B cell (primary cell): ENCODE measurements at regions of chr15 and their contacts with region 1.

Region 1: GRCh38 chr15:40081691-40082194 is 26.9 kb downstream of the BMF start:
- DNase-seq: no peak
- ATAC-seq: no peak
- H3K4me3 ChIP-seq: peak overlapping the region; percentile 1 to 66 (median 14)
- H3K4me3 Mint-ChIP-seq: peak overlapping the region; percentile 74
- H3K27ac ChIP-seq: peak overlapping the region; percentile 81 to 82
- H3K27ac Mint-ChIP-seq: peak overlapping the region; percentile 96
- H3K4me1 ChIP-seq: peaks cover 37 to 49% of the 10 kb centered on the region in 2 donors
- H3K4me1 Mint-ChIP-seq: peaks cover 58% of the 10 kb centered on the region
- H3K27me3 ChIP-seq: no peaks in the 10 kb centered on the region
- H3K27me3 Mint-ChIP-seq: no peaks in the 10 kb centered on the region
- CTCF ChIP-seq: no peak

Region 2: GRCh38 chr15:40069178-40070165 is 12.3 kb before region 1 on chr15:
- CTCF ChIA-PET with region 1: interaction called, 11 read pairs
- POLR2A ChIA-PET with region 1: interaction called, 5 read pairs
- intact Hi-C with region 1: loop called (anchors 1 kb)
- DNase-seq: peak; percentile 75
- ATAC-seq: peak; percentile 78
- H3K4me3 ChIP-seq: no peak overlapping the region
- H3K4me3 Mint-ChIP-seq: peak overlapping the region; percentile 39
- H3K27ac ChIP-seq: peak overlapping the region; percentile 54 to 78
- H3K27ac Mint-ChIP-seq: peak overlapping the region; percentile 90
- H3K4me1 ChIP-seq: peaks cover 34 to 38% of the 10 kb centered on the region in 2 donors
- H3K4me1 Mint-ChIP-seq: peaks cover 41% of the 10 kb centered on the region
- H3K27me3 ChIP-seq: no peaks in the 10 kb centered on the region
- H3K27me3 Mint-ChIP-seq: no peaks in the 10 kb centered on the region
- CTCF ChIP-seq: no peak

Region 3: GRCh38 chr15:40092256-40092978 is 10.7 kb after region 1 on chr15:
- CTCF ChIA-PET with region 1: interaction called, 489 read pairs
- POLR2A ChIA-PET with region 1: interaction called, 58 read pairs
- intact Hi-C with region 1: loop called (anchors 1 kb)
- DNase-seq: no peak
- ATAC-seq: no peak
- H3K4me3 ChIP-seq: peak overlapping the region in 1 of 5 experiments; percentile 38
- H3K4me3 Mint-ChIP-seq: peak overlapping the region; percentile 87
- H3K27ac ChIP-seq: peak overlapping the region; percentile 99 to 100
- H3K27ac Mint-ChIP-seq: peak overlapping the region; percentile 98
- H3K4me1 ChIP-seq: peaks cover 61 to 73% of the 10 kb centered on the region in 2 donors
- H3K4me1 Mint-ChIP-seq: peaks cover 75% of the 10 kb centered on the region
- H3K27me3 ChIP-seq: no peaks in the 10 kb centered on the region
- H3K27me3 Mint-ChIP-seq: no peaks in the 10 kb centered on the region
- CTCF ChIP-seq: no peak

Region 4: DNA sequence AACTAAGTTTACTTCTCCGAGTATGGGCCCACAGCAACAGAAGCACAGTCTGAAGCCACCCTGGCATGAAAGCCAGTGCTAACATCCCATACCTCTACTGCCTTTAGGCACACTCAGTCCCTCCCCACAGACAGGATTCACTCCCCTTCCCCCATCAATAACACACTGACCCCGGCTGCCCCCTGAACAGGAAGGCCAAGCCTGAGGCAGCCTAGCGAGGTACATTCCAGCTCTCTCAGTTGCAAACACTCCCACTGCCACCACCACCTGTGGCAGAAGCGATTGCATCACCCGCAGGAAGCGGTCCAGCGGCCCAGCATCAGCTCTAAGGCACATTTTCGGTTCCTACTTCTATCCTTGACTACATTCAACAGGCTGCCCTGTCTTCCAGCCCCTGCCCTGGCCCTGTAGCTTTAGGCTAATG is 33.9 kb after region 1 on chr15:
- CTCF ChIA-PET with region 1: interaction called, 489 read pairs
- POLR2A ChIA-PET with region 1: no interaction called
- intact Hi-C with region 1: loop called (anchors 5 kb)
- DNase-seq: peak; percentile 88
- ATAC-seq: peak; percentile 92
- H3K4me3 ChIP-seq: no peak overlapping the region
- H3K4me3 Mint-ChIP-seq: peak overlapping the region; percentile 69
- H3K27ac ChIP-seq: peak overlapping the region; percentile 75 to 82
- H3K27ac Mint-ChIP-seq: peak overlapping the region; percentile 99
- H3K4me1 ChIP-seq: peaks cover 22 to 25% of the 10 kb centered on the region in 2 donors
- H3K4me1 Mint-ChIP-seq: peaks cover 31% of the 10 kb centered on the region
- H3K27me3 ChIP-seq: no peaks in the 10 kb centered on the region
- H3K27me3 Mint-ChIP-seq: no peaks in the 10 kb centered on the region
- CTCF ChIP-seq: no peak

Region 5: DNA sequence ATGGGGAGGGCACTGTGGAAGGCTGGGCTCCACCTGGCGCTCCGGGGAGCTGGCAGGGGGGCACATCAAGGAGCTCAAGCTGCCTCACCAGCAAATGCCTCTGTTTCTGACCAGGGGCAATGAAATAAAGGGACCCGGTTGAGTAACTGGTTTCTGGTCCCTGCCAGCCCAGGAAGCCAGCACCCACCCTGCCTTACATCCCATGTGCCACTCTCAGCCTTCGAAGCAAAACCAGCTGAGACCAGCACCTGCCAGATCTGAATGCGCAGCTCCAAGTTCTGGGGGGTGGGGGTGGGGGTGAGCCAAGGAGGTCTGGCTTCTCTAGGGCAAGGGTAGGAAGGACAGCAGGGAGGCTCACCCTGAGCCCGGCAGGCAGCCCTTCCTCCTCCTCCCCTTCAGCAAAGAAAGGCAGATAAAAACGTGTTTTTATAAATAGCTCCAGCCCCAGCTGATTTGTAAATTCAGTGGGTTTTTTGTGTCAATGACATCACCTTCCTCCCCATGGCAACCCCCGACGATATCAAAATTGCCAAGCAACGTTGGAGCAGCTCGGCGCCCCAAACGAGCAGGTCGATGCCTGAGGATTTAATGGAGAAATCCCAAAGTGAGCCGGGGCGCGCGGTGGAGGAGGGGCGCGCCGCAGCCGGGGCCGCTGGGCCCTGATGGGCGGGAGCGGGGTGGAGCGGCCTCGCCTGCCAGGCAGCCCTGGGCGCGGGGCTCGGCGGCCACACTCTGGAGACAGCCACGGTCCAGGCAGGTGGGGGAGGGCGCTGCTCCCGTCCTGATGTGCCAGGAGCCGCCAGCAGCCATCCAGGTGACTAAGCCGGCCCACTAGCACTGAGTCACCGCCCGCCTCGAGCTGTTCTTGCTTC is 157.0 kb after region 1 on chr15 and contains the start of gene PAK6:
- CTCF ChIA-PET with region 1: no interaction called
- POLR2A ChIA-PET with region 1: no interaction called
- intact Hi-C with region 1: no loop called
- DNase-seq: peak; percentile 74
- ATAC-seq: peak; percentile 39
- H3K4me3 ChIP-seq: peak within 1 kb of the TSS in 4 of 5 experiments; percentile 22 to 55 (median 34)
- H3K4me3 Mint-ChIP-seq: peak within 1 kb of the TSS; percentile 71
- H3K27ac ChIP-seq: peak within 1 kb of the TSS in 1 of 2 donors; percentile 44
- H3K27ac Mint-ChIP-seq: peak within 1 kb of the TSS; percentile 5
- H3K4me1 ChIP-seq: peaks cover 30 to 31% of the 10 kb centered on the region in 2 donors
- H3K4me1 Mint-ChIP-seq: peaks cover 36% of the 10 kb centered on the region
- H3K27me3 ChIP-seq: peaks cover 0 to 18% (median 6%) of the 10 kb centered on the region in 4 experiments
- H3K27me3 Mint-ChIP-seq: peaks cover 9% of the 10 kb centered on the region
- CTCF ChIP-seq: no peak
- total RNA-seq, gene PAK6: 0.80 and 1.2 TPM in 2 replicates

Region 6: GRCh38 chr15:40249482-40250303 is 167.9 kb after region 1 on chr15:
- CTCF ChIA-PET with region 1: no interaction called
- POLR2A ChIA-PET with region 1: no interaction called
- intact Hi-C with region 1: no loop called
- DNase-seq: no peak
- ATAC-seq: no peak
- H3K4me3 ChIP-seq: no peak overlapping the region
- H3K4me3 Mint-ChIP-seq: no peak overlapping the region
- H3K27ac ChIP-seq: no peak overlapping the region
- H3K27ac Mint-ChIP-seq: no peak overlapping the region
- H3K4me1 ChIP-seq: peaks cover 10 to 17% of the 10 kb centered on the region in 2 donors
- H3K4me1 Mint-ChIP-seq: peaks cover 10% of the 10 kb centered on the region
- H3K27me3 ChIP-seq: peaks cover 0 to 35% (median 12%) of the 10 kb centered on the region in 4 experiments
- H3K27me3 Mint-ChIP-seq: peaks cover 26% of the 10 kb centered on the region
- CTCF ChIP-seq: no peak

Region 7: DNA sequence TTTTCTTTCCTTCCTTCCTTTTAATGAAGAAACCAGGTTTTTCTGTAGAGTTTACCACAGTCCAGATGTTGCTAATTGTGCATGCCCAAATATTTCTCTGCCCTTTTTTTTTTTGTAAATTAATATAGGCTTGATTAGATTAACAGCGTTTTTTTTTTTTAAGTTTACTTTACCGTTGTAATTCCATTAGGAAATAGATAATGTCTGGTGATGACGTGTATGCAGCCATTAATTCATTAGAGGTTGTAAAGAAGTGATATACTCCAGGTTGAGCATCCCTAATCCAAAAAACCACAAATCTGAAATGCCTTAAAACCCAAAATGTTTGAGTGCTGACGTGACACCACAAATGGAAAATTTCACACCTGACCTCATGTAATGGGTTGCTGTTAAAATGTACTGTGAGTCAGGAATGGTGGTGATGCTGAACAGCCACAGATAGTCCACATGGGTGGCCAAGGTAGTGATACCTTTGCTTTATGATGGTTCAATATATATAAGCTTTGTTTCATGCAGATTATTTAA is 555.5 kb after region 1 on chr15:
- CTCF ChIA-PET with region 1: no interaction called
- POLR2A ChIA-PET with region 1: no interaction called
- intact Hi-C with region 1: no loop called
- DNase-seq: no peak
- ATAC-seq: no peak
- H3K4me3 ChIP-seq: no peak overlapping the region
- H3K4me3 Mint-ChIP-seq: no peak overlapping the region
- H3K27ac ChIP-seq: no peak overlapping the region
- H3K27ac Mint-ChIP-seq: no peak overlapping the region
- H3K4me1 ChIP-seq: no peaks in the 10 kb centered on the region
- H3K4me1 Mint-ChIP-seq: no peaks in the 10 kb centered on the region
- H3K27me3 ChIP-seq: no peaks in the 10 kb centered on the region
- H3K27me3 Mint-ChIP-seq: no peaks in the 10 kb centered on the region
- CTCF ChIP-seq: no peak

Region 8: GRCh38 chr15:40739854-40740253 is 658.1 kb after region 1 on chr15:
- CTCF ChIA-PET with region 1: no interaction called
- POLR2A ChIA-PET with region 1: no interaction called
- intact Hi-C with region 1: no loop called
- DNase-seq: no peak
- ATAC-seq: no peak
- H3K4me3 ChIP-seq: no peak overlapping the region
- H3K4me3 Mint-ChIP-seq: no peak overlapping the region
- H3K27ac ChIP-seq: no peak overlapping the region
- H3K27ac Mint-ChIP-seq: no peak overlapping the region
- H3K4me1 ChIP-seq: no peaks in the 10 kb centered on the region
- H3K4me1 Mint-ChIP-seq: no peaks in the 10 kb centered on the region
- H3K27me3 ChIP-seq: no peaks in the 10 kb centered on the region
- H3K27me3 Mint-ChIP-seq: no peaks in the 10 kb centered on the region
- CTCF ChIP-seq: no peak